A673 (cell line): ENCODE measurements at regions of chr20 and their contacts with region 1.

Region 1: DNA sequence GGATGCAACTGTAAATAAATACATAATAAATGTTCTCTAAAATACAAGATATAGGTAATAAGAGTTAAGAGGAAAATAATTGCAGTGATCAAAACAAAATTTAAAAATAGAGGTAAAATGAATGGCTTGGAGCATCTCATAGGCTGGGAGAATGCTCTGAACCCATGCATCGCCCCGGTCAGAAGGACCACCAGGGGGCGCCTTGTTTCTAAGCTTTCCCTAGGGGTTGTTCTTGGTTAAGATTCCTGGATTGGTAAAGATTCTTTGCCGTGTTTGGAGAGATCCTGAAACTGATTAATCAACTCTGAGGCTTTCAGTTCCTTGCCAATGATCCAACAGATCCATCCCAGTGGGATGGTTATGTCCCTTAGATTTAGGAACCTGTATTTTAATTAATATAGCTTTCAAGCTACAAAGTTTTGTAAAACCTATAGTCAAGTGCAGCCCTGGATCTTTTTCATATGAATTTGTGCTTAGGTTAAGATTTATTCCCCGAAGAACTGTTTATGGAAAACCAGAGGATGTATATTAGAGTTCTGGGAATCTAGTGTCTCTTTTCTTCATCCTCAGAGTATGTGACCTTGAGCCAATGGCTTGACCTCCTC is 45.3 kb upstream of the PRELID3B start:
- DNase-seq: peak; percentile 79
- H3K4me3 ChIP-seq: no peak overlapping the region
- H3K27ac ChIP-seq: no peak overlapping the region
- H3K4me1 ChIP-seq: no peaks in the 10 kb centered on the region
- H3K27me3 ChIP-seq: peaks cover 46% of the 10 kb centered on the region
- CTCF ChIP-seq: peak; percentile 91

Region 2: DNA sequence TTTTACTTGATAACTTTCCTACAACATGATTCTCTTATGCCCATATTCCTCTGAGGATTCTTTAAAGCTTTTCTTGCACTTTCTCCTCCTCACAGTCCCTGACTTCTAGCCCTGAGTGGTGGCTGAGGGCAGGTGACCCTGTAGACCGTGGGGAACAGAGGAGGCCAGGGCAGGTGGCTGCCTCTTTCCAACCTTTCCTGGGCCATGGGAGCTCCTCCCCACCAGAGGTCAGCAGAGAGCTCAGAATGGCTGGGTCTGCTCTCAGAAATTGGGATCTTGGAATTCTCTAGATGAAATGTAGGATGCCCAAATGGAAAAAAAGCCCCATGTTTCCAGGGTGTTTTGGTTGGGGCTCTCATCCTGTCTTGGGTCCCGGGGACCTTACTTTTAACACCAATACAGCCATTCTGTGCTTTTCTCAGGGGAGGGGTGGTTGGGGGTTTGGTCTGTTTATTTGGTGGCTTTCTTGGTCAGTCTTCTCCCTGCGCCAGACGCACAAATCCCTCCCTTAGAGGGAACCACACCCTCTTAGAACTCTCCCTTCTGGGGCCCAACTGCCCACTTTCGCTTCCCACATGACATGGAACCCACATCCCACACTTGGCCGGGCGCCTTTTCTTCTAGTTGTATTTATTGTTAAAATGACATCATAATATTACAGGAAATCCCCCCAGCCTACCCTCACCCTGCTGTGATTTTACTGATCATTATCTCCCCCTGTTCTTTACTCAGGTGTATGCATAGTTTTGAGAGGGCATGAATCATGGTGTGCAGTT is 217.5 kb before region 1 on chr20:
- CTCF ChIA-PET with region 1: no interaction called
- POLR2A ChIA-PET with region 1: no interaction called
- intact Hi-C with region 1: loop called (anchors 10 kb)
- DNase-seq: peak; percentile 69
- H3K4me3 ChIP-seq: no peak overlapping the region
- H3K27ac ChIP-seq: no peak overlapping the region
- H3K4me1 ChIP-seq: peaks cover 4% of the 10 kb centered on the region
- H3K27me3 ChIP-seq: peaks cover 20% of the 10 kb centered on the region
- CTCF ChIP-seq: peak; percentile 83

Region 3: GRCh38 chr20:59207742-59208357 is 119.9 kb after region 1 on chr20:
- CTCF ChIA-PET with region 1: interaction called, 9 read pairs
- POLR2A ChIA-PET with region 1: no interaction called
- intact Hi-C with region 1: loop called (anchors 5 kb)
- DNase-seq: peak; percentile 52
- H3K4me3 ChIP-seq: no peak overlapping the region
- H3K27ac ChIP-seq: no peak overlapping the region
- H3K4me1 ChIP-seq: no peaks in the 10 kb centered on the region
- H3K27me3 ChIP-seq: peaks cover 5% of the 10 kb centered on the region
- CTCF ChIP-seq: peak; percentile 70

Region 4: DNA sequence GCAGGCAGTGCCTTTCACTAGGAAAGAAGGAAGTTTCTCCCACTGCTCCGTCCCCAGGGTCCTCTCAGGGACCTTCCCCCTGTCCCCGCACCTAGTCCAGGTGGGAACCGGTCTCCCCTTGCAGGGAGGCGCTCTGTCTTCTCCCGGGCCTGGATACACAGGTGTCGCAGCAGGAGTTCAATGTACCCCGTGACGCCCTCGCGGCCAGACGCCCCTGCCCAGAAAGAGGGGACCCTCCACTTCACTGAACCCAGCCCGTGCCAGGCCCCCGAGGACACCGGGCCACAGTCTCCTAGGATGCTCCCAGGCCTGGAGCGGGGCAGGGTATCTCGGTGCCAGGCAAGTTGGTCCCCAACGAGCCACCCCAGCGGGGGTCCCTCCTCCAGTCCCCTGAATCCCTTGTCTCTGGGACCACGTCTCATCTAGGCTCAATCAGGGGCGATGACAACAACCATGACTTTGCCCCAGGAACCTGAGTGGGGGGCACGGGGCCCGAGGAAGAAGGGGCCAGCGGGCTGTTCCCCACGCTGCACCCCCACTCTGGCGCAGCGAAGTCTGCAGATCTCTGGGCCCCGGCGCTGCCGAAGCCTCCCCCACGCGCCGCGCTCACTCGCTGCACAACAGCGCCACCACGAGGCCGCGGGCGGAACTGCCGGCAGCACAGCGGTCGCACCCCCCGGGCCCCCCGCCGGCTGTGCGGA is 315.5 kb after region 1 on chr20:
- CTCF ChIA-PET with region 1: interaction called, 3 read pairs
- POLR2A ChIA-PET with region 1: no interaction called
- intact Hi-C with region 1: loop called (anchors 5 kb)
- DNase-seq: peak; percentile 66
- H3K4me3 ChIP-seq: peak overlapping the region; percentile 24
- H3K27ac ChIP-seq: no peak overlapping the region
- H3K4me1 ChIP-seq: peaks cover 10% of the 10 kb centered on the region
- H3K27me3 ChIP-seq: peaks cover 79% of the 10 kb centered on the region
- CTCF ChIP-seq: peak; percentile 96

Region 5: DNA sequence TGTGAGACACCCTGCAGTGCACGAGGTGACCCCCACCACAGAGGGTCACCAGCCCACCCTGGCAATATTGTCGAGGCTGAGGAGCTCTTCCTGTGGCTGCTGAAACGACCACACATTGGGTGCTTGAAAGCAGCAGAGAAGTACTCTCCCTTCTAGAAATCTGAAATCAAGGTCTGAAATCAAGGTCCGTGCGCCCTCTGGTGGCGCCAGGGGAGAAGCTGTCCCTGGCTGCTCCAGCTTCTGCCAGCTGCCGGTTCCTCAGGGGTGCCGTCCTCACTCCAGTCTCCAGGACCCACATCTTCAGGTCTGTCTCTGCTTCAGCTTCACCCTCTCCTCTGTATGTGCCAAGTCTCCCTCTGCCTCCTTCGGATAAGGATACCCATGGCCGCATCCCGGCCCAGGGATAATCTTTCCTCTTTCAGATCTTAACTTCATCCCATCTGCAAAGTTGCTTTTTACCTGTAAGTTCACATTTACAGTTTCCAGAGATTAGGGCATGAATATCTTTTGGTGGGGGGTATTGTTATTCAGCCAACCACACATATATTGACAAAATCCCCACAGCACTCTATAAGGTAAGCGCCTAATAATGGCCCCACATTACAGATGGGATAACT is 408.1 kb after region 1 on chr20:
- CTCF ChIA-PET with region 1: interaction called, 14 read pairs
- POLR2A ChIA-PET with region 1: no interaction called
- intact Hi-C with region 1: no loop called
- DNase-seq: peak; percentile 76
- H3K4me3 ChIP-seq: no peak overlapping the region
- H3K27ac ChIP-seq: no peak overlapping the region
- H3K4me1 ChIP-seq: no peaks in the 10 kb centered on the region
- H3K27me3 ChIP-seq: peaks cover 20% of the 10 kb centered on the region
- CTCF ChIP-seq: peak; percentile 92